Activated T-helper 2 cell treated with anti-CD3 and anti-CD28 coated beads, Interferon-gamma antibody, Interleukin-2, Interleukin-4, amounts not matched to agents 10 μg/mL and 5 μg/mL and 100 μg/mL, durations not matched to agents 14 hours and 24 hours and 36 hours (primary cell): ENCODE measurements at regions of chr15 and their contacts with region 1.

Region 1: GRCh38 chr15:41283653-41284426 is 48.6 kb downstream of the OIP5 start:
- DNase-seq: peak; percentile 97
- H3K4me3 Mint-ChIP-seq: peak overlapping the region; percentile 99
- H3K27ac Mint-ChIP-seq: peak overlapping the region; percentile 98
- H3K4me1 Mint-ChIP-seq: peaks cover 37% of the 10 kb centered on the region
- H3K27me3 Mint-ChIP-seq: no peaks in the 10 kb centered on the region

Region 2: DNA sequence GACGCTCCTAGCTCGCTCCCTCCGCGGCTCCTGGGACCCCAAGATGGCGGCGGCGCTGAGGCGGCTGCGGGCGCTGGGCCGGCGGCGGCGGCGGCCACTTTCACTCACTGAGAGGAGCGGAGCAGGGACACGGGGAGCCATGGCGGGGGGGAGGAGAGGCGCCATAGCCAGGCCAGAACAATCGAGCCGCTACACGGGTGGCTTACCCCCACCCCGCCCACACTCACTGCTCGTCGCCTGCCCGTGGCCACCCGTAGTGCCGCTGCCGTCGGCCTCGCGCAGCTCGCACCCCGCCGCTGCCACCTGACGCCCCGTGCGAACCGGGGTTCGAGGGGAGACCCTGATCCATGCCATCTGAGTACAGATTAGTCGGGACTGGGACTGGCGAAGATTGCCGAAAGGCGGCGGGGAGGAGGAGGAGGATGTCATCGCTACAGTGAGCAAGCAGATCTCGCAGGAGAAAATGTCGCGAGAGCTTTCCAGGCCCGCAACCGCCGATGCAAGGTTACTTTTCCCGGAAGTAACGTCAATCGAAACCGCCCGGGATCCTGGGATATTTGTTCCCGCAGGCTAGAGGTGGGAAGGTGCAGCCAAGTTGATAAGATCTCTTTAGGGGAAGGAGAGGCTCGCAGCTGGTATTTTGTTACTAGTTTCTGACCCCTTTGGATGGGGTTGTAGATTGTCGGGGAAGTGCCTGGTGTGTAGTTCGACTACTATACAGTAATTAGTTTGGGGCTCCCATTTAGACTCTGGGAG is 167.5 kb before region 1 on chr15 and contains the start of gene INO80:
- intact Hi-C with region 1: loop called (anchors 2 kb)
- DNase-seq: peak; percentile 96
- H3K4me3 Mint-ChIP-seq: peak within 1 kb of the TSS; percentile 97
- H3K27ac Mint-ChIP-seq: peak within 1 kb of the TSS; percentile 99
- H3K4me1 Mint-ChIP-seq: peaks cover 8% of the 10 kb centered on the region
- H3K27me3 Mint-ChIP-seq: no peaks in the 10 kb centered on the region
- total RNA-seq, gene INO80: 33.2 and 35.2 TPM in 2 replicates

Region 3: GRCh38 chr15:41331833-41332787 is 48.3 kb after region 1 on chr15 and contains the start of gene OIP5:
- intact Hi-C with region 1: loop called (anchors 1 kb)
- DNase-seq: peak; percentile 99
- H3K4me3 Mint-ChIP-seq: peak within 1 kb of the TSS; percentile 94
- H3K27ac Mint-ChIP-seq: peak within 1 kb of the TSS; percentile 93
- H3K4me1 Mint-ChIP-seq: peaks cover 33% of the 10 kb centered on the region
- H3K27me3 Mint-ChIP-seq: no peaks in the 10 kb centered on the region
- total RNA-seq, gene OIP5: 13.7 and 16.1 TPM in 2 replicates